Activated T-helper 2 cell treated with anti-CD3 and anti-CD28 coated beads, Interferon-gamma antibody, Interleukin-2, Interleukin-4, amounts not matched to agents 10 μg/mL and 5 μg/mL and 100 μg/mL, durations not matched to agents 14 hours and 24 hours and 36 hours (primary cell): ENCODE measurements at regions of chr12 and their contacts with region 1.

Region 1: GRCh38 chr12:104494137-104494792 is 37.5 kb downstream of the CHST11 start:
- DNase-seq: no peak
- H3K4me3 Mint-ChIP-seq: peak overlapping the region; percentile 56
- H3K27ac Mint-ChIP-seq: peak overlapping the region; percentile 85
- H3K4me1 Mint-ChIP-seq: peaks cover 80% of the 10 kb centered on the region
- H3K27me3 Mint-ChIP-seq: no peaks in the 10 kb centered on the region

Region 2: GRCh38 chr12:104462931-104463339 is 31.3 kb before region 1 on chr12:
- intact Hi-C with region 1: loop called (anchors 1 kb)
- DNase-seq: peak; percentile 58
- H3K4me3 Mint-ChIP-seq: peak overlapping the region; percentile 74
- H3K27ac Mint-ChIP-seq: peak overlapping the region; percentile 92
- H3K4me1 Mint-ChIP-seq: peaks cover 68% of the 10 kb centered on the region
- H3K27me3 Mint-ChIP-seq: no peaks in the 10 kb centered on the region

Region 3: GRCh38 chr12:104478396-104479122 is 15.7 kb before region 1 on chr12:
- intact Hi-C with region 1: loop called (anchors 2 kb)
- DNase-seq: no peak
- H3K4me3 Mint-ChIP-seq: peak overlapping the region; percentile 83
- H3K27ac Mint-ChIP-seq: peak overlapping the region; percentile 96
- H3K4me1 Mint-ChIP-seq: peaks cover 80% of the 10 kb centered on the region
- H3K27me3 Mint-ChIP-seq: no peaks in the 10 kb centered on the region

Region 4: GRCh38 chr12:104569346-104570173 is 75.3 kb after region 1 on chr12:
- intact Hi-C with region 1: loop called (anchors 1 kb)
- DNase-seq: peak; percentile 51
- H3K4me3 Mint-ChIP-seq: peak overlapping the region; percentile 61
- H3K27ac Mint-ChIP-seq: peak overlapping the region; percentile 71
- H3K4me1 Mint-ChIP-seq: peaks cover 54% of the 10 kb centered on the region
- H3K27me3 Mint-ChIP-seq: no peaks in the 10 kb centered on the region

Region 5: GRCh38 chr12:104671407-104672098 is 177.3 kb after region 1 on chr12:
- intact Hi-C with region 1: loop called (anchors 5 kb)
- DNase-seq: peak; percentile 54
- H3K4me3 Mint-ChIP-seq: peak overlapping the region; percentile 45
- H3K27ac Mint-ChIP-seq: peak overlapping the region; percentile 89
- H3K4me1 Mint-ChIP-seq: peaks cover 55% of the 10 kb centered on the region
- H3K27me3 Mint-ChIP-seq: no peaks in the 10 kb centered on the region